HepG2 (cell line): ENCODE measurements at regions of chr14 and their contacts with region 1.

Region 1: GRCh38 chr14:93105362-93105761 is 10.4 kb downstream of the ITPK1 start:
- DNase-seq: no peak
- ATAC-seq: no peak
- H3K4me3 ChIP-seq: no peak overlapping the region
- H3K27ac ChIP-seq: no peak overlapping the region
- H3K4me1 ChIP-seq: peaks cover 63% of the 10 kb centered on the region
- H3K27me3 ChIP-seq: no peaks in the 10 kb centered on the region
- CTCF ChIP-seq: no peak
- EP300 ChIP-seq: no peak
- POLR2A ChIP-seq: no peak
- RAD21 ChIP-seq: no peak

Region 2: GRCh38 chr14:92877757-92878431 is 227.5 kb before region 1 on chr14:
- CTCF ChIA-PET with region 1: no interaction called
- POLR2A ChIA-PET with region 1: no interaction called
- in situ Hi-C with region 1: no loop called
- intact Hi-C with region 1: no loop called
- DNase-seq: peak; percentile 48
- ATAC-seq: peak; percentile 95
- H3K4me3 ChIP-seq: peak overlapping the region in 1 of 3 experiments; percentile 51; a peak in 2 of 6 replicates
- H3K27ac ChIP-seq: peak overlapping the region; percentile 23
- H3K4me1 ChIP-seq: peaks cover 28% of the 10 kb centered on the region
- H3K27me3 ChIP-seq: no peaks in the 10 kb centered on the region; a peak in 2 of 5 replicates
- CTCF ChIP-seq: peak; percentile 33
- EP300 ChIP-seq: peak in 1 of 2 experiments; percentile 19; a peak in 1 of 4 replicates
- POLR2A ChIP-seq: no peak
- RAD21 ChIP-seq: no peak

Region 3: GRCh38 chr14:93906341-93907329 is 801.3 kb after region 1 on chr14:
- CTCF ChIA-PET with region 1: no interaction called
- POLR2A ChIA-PET with region 1: no interaction called
- in situ Hi-C with region 1: no loop called
- intact Hi-C with region 1: loop called (anchors 5 kb)
- DNase-seq: peak; percentile 59
- ATAC-seq: no peak
- H3K4me3 ChIP-seq: no peak overlapping the region
- H3K27ac ChIP-seq: peak overlapping the region; percentile 81
- H3K4me1 ChIP-seq: peaks cover 99% of the 10 kb centered on the region
- H3K27me3 ChIP-seq: no peaks in the 10 kb centered on the region
- CTCF ChIP-seq: peak; percentile 74
- EP300 ChIP-seq: no peak
- POLR2A ChIP-seq: no peak
- RAD21 ChIP-seq: peak; percentile 54; the same call in 1 of the 2 replicates